ENCODE measurements at regions of chr17 and their contacts with region 1.

Region 1: GRCh38 chr17:15999439-16000350 is at the starts of genes TTC19 and ZSWIM7:
- DNase-seq: peak; percentile 89 to 94 (median 91)
- H3K4me3 ChIP-seq: peak within 1 kb of the TSS; percentile 73 to 79
- H3K4me3 Mint-ChIP-seq: peak within 1 kb of the TSS; percentile 91 to 97 (median 95)
- H3K27ac ChIP-seq: peak within 1 kb of the TSS; percentile 76
- H3K27ac Mint-ChIP-seq: peak within 1 kb of the TSS; percentile 86 to 99 (median 98)
- H3K4me1 ChIP-seq: peaks cover 28% of the 10 kb centered on the region
- H3K4me1 Mint-ChIP-seq: peaks cover 24 to 42% (median 33%) of the 10 kb centered on the region in 4 donors
- H3K27me3 ChIP-seq: no peaks in the 10 kb centered on the region
- H3K27me3 Mint-ChIP-seq: no peaks in the 10 kb centered on the region
- total RNA-seq, gene TTC19: 34.1 to 36.3 TPM
- total RNA-seq, gene ZSWIM7: 30.2 to 30.9 TPM

Region 2: GRCh38 chr17:15257258-15257788 is 742.4 kb before region 1 on chr17:
- CTCF ChIA-PET with region 1: interaction called, 15 read pairs
- POLR2A ChIA-PET with region 1: no interaction called
- intact Hi-C with region 1: no loop called
- DNase-seq: peak; percentile 32 to 50 (median 44)
- H3K4me3 ChIP-seq: no peak overlapping the region
- H3K4me3 Mint-ChIP-seq: peak overlapping the region in 3 of 8 donors; percentile 10 to 68 (median 51)
- H3K27ac ChIP-seq: no peak overlapping the region
- H3K27ac Mint-ChIP-seq: no peak overlapping the region
- H3K4me1 ChIP-seq: peaks cover 21% of the 10 kb centered on the region
- H3K4me1 Mint-ChIP-seq: peaks cover 11 to 25% (median 14%) of the 10 kb centered on the region in 4 donors
- H3K27me3 ChIP-seq: peaks cover 8% of the 10 kb centered on the region
- H3K27me3 Mint-ChIP-seq: peaks cover 42 to 44% of the 10 kb centered on the region in 2 donors

Region 3: GRCh38 chr17:15930426-15930825 is 69.3 kb before region 1 on chr17:
- CTCF ChIA-PET with region 1: no interaction called
- POLR2A ChIA-PET with region 1: no interaction called
- intact Hi-C with region 1: no loop called
- DNase-seq: no peak
- H3K4me3 ChIP-seq: no peak overlapping the region
- H3K4me3 Mint-ChIP-seq: no peak overlapping the region
- H3K27ac ChIP-seq: no peak overlapping the region
- H3K27ac Mint-ChIP-seq: no peak overlapping the region
- H3K4me1 ChIP-seq: no peaks in the 10 kb centered on the region
- H3K4me1 Mint-ChIP-seq: peaks cover 0 to 2% (median 0%) of the 10 kb centered on the region in 4 donors
- H3K27me3 ChIP-seq: no peaks in the 10 kb centered on the region
- H3K27me3 Mint-ChIP-seq: peaks cover 15 to 22% of the 10 kb centered on the region in 2 donors

Region 4: DNA sequence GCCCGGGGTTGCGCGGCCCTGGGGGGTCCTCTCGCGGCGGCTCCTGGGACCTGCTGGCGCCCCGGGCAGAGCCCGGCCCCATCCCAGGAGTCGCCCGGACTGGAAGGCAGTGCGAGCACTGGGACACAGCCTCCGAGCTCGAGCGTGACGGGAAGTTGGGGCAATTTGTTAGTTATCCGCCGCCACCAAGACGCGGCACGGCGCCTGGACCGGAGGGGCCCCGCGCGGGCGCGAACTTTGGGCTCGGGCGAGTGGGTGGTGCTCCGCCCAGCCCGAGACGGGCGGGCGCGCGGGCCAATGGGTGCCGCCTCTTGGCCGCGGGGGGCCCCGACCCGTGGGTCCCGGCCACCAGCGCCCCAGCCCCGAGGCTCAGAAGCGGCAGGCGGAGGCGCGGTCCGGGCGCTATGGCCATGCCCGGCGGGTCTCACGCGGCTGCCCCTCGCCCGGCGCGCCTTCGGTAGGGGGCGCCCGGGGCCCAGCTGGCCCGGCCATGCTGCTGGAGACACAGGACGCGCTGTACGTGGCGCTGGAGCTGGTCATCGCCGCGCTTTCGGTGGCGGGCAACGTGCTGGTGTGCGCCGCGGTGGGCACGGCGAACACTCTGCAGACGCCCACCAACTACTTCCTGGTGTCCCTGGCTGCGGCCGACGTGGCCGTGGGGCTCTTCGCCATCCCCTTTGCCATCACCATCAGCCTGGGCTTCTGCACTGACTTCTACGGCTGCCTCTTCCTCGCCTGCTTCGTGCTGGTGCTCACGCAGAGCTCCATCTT is 54.8 kb before region 1 on chr17 and contains the start of gene ADORA2B:
- CTCF ChIA-PET with region 1: no interaction called
- POLR2A ChIA-PET with region 1: interaction called, 5 read pairs
- intact Hi-C with region 1: loop called (anchors 1 kb)
- DNase-seq: peak in 4 of 5 donors; percentile 14 to 31 (median 24)
- H3K4me3 ChIP-seq: peak within 1 kb of the TSS in 1 of 2 donors; percentile 43
- H3K4me3 Mint-ChIP-seq: peak within 1 kb of the TSS; percentile 78 to 90 (median 82)
- H3K27ac ChIP-seq: no peak within 1 kb of the TSS
- H3K27ac Mint-ChIP-seq: peak within 1 kb of the TSS in 1 of 7 donors; percentile 35
- H3K4me1 ChIP-seq: peaks cover 6% of the 10 kb centered on the region
- H3K4me1 Mint-ChIP-seq: peaks cover 5 to 10% (median 7%) of the 10 kb centered on the region in 4 donors
- H3K27me3 ChIP-seq: peaks cover 5% of the 10 kb centered on the region
- H3K27me3 Mint-ChIP-seq: peaks cover 24 to 30% of the 10 kb centered on the region in 2 donors
- total RNA-seq, gene ADORA2B: 0.23 to 0.25 TPM

Region 5: DNA sequence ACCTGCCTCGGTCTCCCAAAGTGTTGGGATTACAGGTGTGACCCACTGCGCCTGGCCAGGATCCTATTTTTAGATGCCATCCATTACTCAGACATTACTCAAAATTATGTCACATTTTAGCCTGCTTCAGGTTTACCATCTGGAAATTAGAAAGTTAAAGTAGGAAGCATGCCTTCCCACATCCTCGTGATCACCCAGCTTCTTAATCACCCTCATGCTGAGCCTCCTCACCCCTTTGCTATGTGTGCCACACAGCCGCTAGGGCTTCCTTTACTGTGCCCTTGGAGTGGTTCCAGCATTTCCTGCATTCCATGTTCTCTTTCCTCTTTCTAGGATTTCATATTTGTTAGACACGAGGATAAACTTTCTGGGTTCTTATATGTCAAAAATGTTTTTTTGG is 45.5 kb before region 1 on chr17:
- CTCF ChIA-PET with region 1: no interaction called
- POLR2A ChIA-PET with region 1: interaction called, 10 read pairs
- intact Hi-C with region 1: loop called (anchors 1 kb)
- DNase-seq: no peak
- H3K4me3 ChIP-seq: no peak overlapping the region
- H3K4me3 Mint-ChIP-seq: no peak overlapping the region
- H3K27ac ChIP-seq: no peak overlapping the region
- H3K27ac Mint-ChIP-seq: no peak overlapping the region
- H3K4me1 ChIP-seq: peaks cover 9% of the 10 kb centered on the region
- H3K4me1 Mint-ChIP-seq: peaks cover 9 to 16% (median 12%) of the 10 kb centered on the region in 4 donors
- H3K27me3 ChIP-seq: no peaks in the 10 kb centered on the region
- H3K27me3 Mint-ChIP-seq: peaks cover 0 to 3% of the 10 kb centered on the region in 2 donors

Region 6: GRCh38 chr17:16215273-16215964 is 215.7 kb after region 1 on chr17 and contains the start of gene NCOR1:
- CTCF ChIA-PET with region 1: no interaction called
- POLR2A ChIA-PET with region 1: interaction called, 3 read pairs
- intact Hi-C with region 1: loop called (anchors 1 kb)
- DNase-seq: peak; percentile 82 to 89 (median 84)
- H3K4me3 ChIP-seq: peak within 1 kb of the TSS; percentile 59 to 80
- H3K4me3 Mint-ChIP-seq: peak within 1 kb of the TSS; percentile 93 to 100 (median 97)
- H3K27ac ChIP-seq: peak within 1 kb of the TSS; percentile 87
- H3K27ac Mint-ChIP-seq: peak within 1 kb of the TSS; percentile 88 to 98 (median 94)
- H3K4me1 ChIP-seq: peaks cover 59% of the 10 kb centered on the region
- H3K4me1 Mint-ChIP-seq: peaks cover 28 to 65% (median 38%) of the 10 kb centered on the region in 4 donors
- H3K27me3 ChIP-seq: no peaks in the 10 kb centered on the region
- H3K27me3 Mint-ChIP-seq: no peaks in the 10 kb centered on the region
- total RNA-seq, gene NCOR1: 156 to 169 TPM

Measured in CD4-positive, alpha-beta memory T cell (primary cell).